ENCODE measurements at regions of chr6 and their contacts with region 1.

Region 1: GRCh38 chr6:132820629-132821381 is 6.4 kb downstream of the RPS12 start:
- ATAC-seq: peak; percentile 19 to 35 (median 34)
- H3K4me3 ChIP-seq: no peak overlapping the region
- H3K27ac ChIP-seq: no peak overlapping the region
- H3K4me1 ChIP-seq: peaks cover 6 to 7% of the 10 kb centered on the region in 2 donors

Region 2: DNA sequence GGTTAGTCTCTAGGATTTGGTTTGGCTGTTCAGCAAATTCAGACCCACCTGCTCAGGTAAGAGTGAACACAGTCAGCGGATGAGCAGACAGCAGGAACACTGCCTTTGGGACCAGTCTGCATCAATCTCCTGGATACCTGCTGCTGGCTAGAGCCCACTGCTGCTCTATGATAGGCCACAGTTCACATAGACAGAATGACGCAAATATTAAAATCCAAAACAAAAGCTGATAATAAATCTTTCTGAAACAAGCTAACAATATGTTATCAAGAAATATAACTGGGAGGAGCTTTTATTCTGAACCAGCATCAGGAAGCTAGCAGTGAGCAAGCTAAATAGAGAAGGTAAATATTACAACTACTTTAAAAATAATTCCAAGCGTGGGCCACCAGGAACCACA is 161.7 kb before region 1 on chr6 and contains the start of gene TAAR1:
- in situ Hi-C with region 1: no loop called
- ATAC-seq: no peak
- H3K4me3 ChIP-seq: no peak within 1 kb of the TSS
- H3K27ac ChIP-seq: no peak within 1 kb of the TSS
- H3K4me1 ChIP-seq: no peaks in the 10 kb centered on the region
- total RNA-seq, gene TAAR1: 0.31 TPM in 1 of 8 experiments, not detected in the others

Region 3: GRCh38 chr6:133553652-133554051 is 732.8 kb after region 1 on chr6:
- in situ Hi-C with region 1: loop called in 6 of 9 experiments (anchors 10 to 25 kb)
- ATAC-seq: peak in 7 of 8 experiments; percentile 29 to 64 (median 48)
- H3K4me3 ChIP-seq: no peak overlapping the region
- H3K27ac ChIP-seq: no peak overlapping the region
- H3K4me1 ChIP-seq: peaks cover 12 to 13% of the 10 kb centered on the region in 2 donors